AG04449 (cell line): ENCODE measurements at regions of chr9 and their contacts with region 1.

Region 1: DNA sequence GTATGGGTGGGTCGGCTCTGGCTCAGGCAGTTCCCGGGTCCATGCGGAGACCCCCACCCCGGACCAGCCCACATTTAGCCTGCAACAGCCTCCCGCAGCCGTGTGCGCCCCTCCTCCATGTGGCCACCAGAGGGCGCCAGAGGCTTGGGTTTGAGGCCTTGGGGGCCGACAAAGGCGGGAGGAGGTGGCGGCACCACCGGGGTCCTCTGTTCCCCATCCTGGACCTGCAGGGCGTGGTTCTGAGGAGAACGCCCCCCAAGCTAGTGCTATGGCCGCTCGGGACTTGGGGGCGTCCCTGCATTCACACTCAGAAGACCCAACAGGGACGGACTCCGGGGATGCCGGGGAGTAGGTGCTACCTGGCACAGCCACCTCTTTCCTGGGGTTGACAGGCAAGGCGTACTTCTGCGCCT is 16.5 kb downstream of the ASS1 start:
- DNase-seq: no peak
- H3K4me3 ChIP-seq: no peak overlapping the region
- CTCF ChIP-seq: peak; percentile 94

Region 2: GRCh38 chr9:130446111-130446861 is 14.9 kb before region 1 on chr9:
- CTCF ChIA-PET with region 1: interaction called, 36 read pairs
- POLR2A ChIA-PET with region 1: interaction called, 5 read pairs
- DNase-seq: peak; percentile 59
- H3K4me3 ChIP-seq: peak overlapping the region; percentile 59
- CTCF ChIP-seq: no peak

Region 3: GRCh38 chr9:130472184-130472705 is 11.0 kb after region 1 on chr9:
- CTCF ChIA-PET with region 1: interaction called, 21 read pairs
- POLR2A ChIA-PET with region 1: no interaction called
- DNase-seq: no peak
- H3K4me3 ChIP-seq: no peak overlapping the region
- CTCF ChIP-seq: no peak

Region 4: GRCh38 chr9:130672466-130672865 is 211.2 kb after region 1 on chr9:
- CTCF ChIA-PET with region 1: interaction called, 414 read pairs
- POLR2A ChIA-PET with region 1: no interaction called
- DNase-seq: no peak
- H3K4me3 ChIP-seq: no peak overlapping the region
- CTCF ChIP-seq: no peak

Region 5: GRCh38 chr9:130693426-130694191 is 232.4 kb after region 1 on chr9 and contains the start of gene EXOSC2:
- CTCF ChIA-PET with region 1: interaction called, 414 read pairs
- POLR2A ChIA-PET with region 1: no interaction called
- DNase-seq: peak; percentile 88
- H3K4me3 ChIP-seq: peak within 1 kb of the TSS; percentile 86
- CTCF ChIP-seq: no peak